Activated naive CD4-positive, alpha-beta T cell treated with anti-CD3 and anti-CD28 coated beads for 36 hours (primary cell): ENCODE measurements at regions of chr7 and their contacts with region 1.

Region 1: DNA sequence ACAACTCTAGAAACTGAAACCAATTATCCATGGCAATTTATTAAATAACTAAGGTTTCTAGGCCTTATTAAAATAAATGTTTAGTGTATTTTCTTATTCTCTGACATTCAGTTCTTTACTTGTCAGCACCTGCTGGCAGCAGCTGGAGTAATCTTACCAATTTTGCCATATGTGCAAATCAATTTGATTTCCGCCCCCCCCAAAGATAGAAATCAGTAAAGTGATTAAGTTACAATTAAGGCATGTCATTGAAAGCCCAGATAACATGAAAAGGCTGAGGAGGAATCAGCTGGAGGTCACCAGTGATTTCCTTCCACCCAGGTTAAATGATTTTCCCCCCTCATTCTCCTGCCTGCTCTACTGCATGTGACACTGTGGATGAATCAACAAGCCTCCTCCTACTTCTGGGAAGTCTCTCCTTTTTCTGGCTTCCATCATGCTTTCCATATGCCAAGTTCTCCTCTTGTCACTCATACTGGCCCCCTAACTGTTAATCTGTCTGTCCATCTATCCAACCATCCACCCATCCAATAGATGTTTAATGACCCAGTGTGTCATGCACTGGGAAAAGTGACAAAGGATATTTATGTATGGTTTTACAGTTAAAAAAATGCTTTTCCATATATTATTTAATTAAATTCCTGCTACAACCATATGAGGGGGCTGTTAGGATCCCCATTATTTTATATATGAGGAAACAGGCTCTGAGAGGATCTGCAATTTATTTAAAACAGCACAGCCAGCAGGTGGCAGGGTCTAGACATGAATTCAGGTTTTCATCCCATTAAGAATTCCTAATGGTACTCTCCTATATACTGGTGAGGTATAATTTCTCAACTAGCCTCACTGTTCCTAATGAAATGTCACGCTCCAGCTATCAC is 116.5 kb downstream of the ATXN7L1 start:
- DNase-seq: peak; percentile 48
- H3K4me3 Mint-ChIP-seq: no peak overlapping the region
- H3K27ac Mint-ChIP-seq: no peak overlapping the region
- H3K4me1 Mint-ChIP-seq: peaks cover 28% of the 10 kb centered on the region
- H3K27me3 Mint-ChIP-seq: no peaks in the 10 kb centered on the region

Region 2: GRCh38 chr7:105652359-105652993 is 107.4 kb before region 1 on chr7:
- CTCF ChIA-PET with region 1: interaction called, 23 read pairs
- intact Hi-C with region 1: loop called (anchors 2 kb)
- DNase-seq: peak; percentile 79
- H3K4me3 Mint-ChIP-seq: no peak overlapping the region
- H3K27ac Mint-ChIP-seq: no peak overlapping the region
- H3K4me1 Mint-ChIP-seq: peaks cover 10% of the 10 kb centered on the region
- H3K27me3 Mint-ChIP-seq: no peaks in the 10 kb centered on the region

Region 3: DNA sequence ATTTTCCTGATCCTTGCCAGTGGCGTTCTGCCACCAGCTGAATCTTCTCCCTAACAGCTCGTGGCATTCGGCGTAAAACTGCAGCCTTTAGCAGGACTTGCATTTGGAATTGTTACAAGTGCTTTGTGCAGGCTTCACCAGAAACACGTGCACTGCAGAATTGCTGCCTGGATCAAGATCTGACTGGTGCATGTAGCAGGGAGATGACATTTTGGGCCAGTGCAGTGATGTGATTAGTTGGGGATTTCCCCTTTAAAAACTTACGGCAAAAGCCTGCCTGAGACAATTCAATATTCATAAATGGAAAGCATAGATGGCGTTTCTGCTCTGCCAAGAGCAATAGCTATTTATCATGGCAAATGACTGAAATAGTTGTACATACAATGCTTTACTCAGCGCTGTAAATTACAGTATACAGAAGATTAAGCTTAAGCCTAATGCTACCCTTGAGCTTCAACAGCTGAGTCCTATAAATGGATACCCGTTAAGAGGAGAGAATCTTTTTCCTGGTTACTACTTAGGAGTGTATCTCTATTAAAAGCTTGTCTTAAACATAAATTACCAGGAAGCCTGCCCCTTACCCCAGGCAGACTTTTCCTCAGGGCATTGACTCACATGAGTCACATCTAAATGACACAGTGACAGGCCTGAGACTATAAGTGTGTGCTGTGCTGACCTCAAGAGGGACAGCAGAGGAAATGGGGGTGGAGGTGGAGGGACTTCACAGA is 10.2 kb after region 1 on chr7:
- CTCF ChIA-PET with region 1: interaction called, 13 read pairs
- intact Hi-C with region 1: no loop called
- DNase-seq: peak; percentile 39
- H3K4me3 Mint-ChIP-seq: no peak overlapping the region
- H3K27ac Mint-ChIP-seq: no peak overlapping the region
- H3K4me1 Mint-ChIP-seq: peaks cover 26% of the 10 kb centered on the region
- H3K27me3 Mint-ChIP-seq: no peaks in the 10 kb centered on the region

Region 4: GRCh38 chr7:105924945-105925344 is 165.0 kb after region 1 on chr7:
- CTCF ChIA-PET with region 1: interaction called, 18 read pairs
- intact Hi-C with region 1: no loop called
- DNase-seq: peak; percentile 60
- H3K4me3 Mint-ChIP-seq: no peak overlapping the region
- H3K27ac Mint-ChIP-seq: peak overlapping the region; percentile 9
- H3K4me1 Mint-ChIP-seq: peaks cover 26% of the 10 kb centered on the region
- H3K27me3 Mint-ChIP-seq: peaks cover 2% of the 10 kb centered on the region

Region 5: GRCh38 chr7:106031300-106032035 is 271.6 kb after region 1 on chr7:
- CTCF ChIA-PET with region 1: interaction called, 13 read pairs
- intact Hi-C with region 1: no loop called
- DNase-seq: peak; percentile 38
- H3K4me3 Mint-ChIP-seq: no peak overlapping the region
- H3K27ac Mint-ChIP-seq: no peak overlapping the region
- H3K4me1 Mint-ChIP-seq: peaks cover 28% of the 10 kb centered on the region
- H3K27me3 Mint-ChIP-seq: no peaks in the 10 kb centered on the region

Region 6: GRCh38 chr7:106166655-106167342 is 406.9 kb after region 1 on chr7:
- CTCF ChIA-PET with region 1: interaction called, 4 read pairs
- intact Hi-C with region 1: loop called (anchors 1 kb)
- DNase-seq: peak; percentile 63
- H3K4me3 Mint-ChIP-seq: no peak overlapping the region
- H3K27ac Mint-ChIP-seq: no peak overlapping the region
- H3K4me1 Mint-ChIP-seq: no peaks in the 10 kb centered on the region
- H3K27me3 Mint-ChIP-seq: peaks cover 3% of the 10 kb centered on the region